ENCODE measurements at regions of chr2 and their contacts with region 1.

Region 1: GRCh38 chr2:39119732-39120520 is 925 bp downstream of the SOS1 start:
- DNase-seq: peak; percentile 66
- H3K4me3 Mint-ChIP-seq: peak overlapping the region; percentile 73
- H3K27ac Mint-ChIP-seq: peak overlapping the region; percentile 67
- H3K4me1 Mint-ChIP-seq: peaks cover 25% of the 10 kb centered on the region
- H3K27me3 Mint-ChIP-seq: no peaks in the 10 kb centered on the region
- CTCF ChIP-seq: no peak

Region 2: DNA sequence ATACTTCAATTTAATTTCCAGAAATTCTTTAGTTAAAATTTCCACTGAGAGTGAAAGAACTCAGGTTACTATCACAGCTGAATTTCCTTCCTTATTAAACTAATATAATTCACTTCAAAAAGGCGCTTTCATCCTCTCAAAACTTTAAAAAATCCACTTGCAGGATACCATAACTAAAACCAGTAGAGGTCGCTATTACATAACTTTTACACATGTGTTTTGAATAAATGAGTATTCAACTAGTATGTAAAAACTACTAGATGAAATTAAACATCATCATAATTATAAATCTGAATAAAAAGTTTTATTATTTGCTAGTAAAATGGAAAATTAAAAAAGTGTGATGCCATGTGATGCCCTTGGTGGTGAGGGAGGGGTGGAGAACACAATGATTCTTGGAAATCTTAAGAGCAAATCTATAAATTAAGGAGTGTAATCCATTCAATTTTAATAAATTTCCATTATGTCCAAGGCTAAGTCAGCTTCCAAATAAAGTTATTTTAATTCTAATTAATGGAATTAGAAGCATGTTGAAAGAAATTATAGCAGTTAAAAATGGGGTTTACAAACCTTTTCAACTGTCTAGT is 60.5 kb before region 1 on chr2:
- CTCF ChIA-PET with region 1: no interaction called
- intact Hi-C with region 1: loop called (anchors 2 kb)
- DNase-seq: no peak
- H3K4me3 Mint-ChIP-seq: no peak overlapping the region
- H3K27ac Mint-ChIP-seq: no peak overlapping the region
- H3K4me1 Mint-ChIP-seq: no peaks in the 10 kb centered on the region
- H3K27me3 Mint-ChIP-seq: no peaks in the 10 kb centered on the region
- CTCF ChIP-seq: peak; percentile 43

Region 3: GRCh38 chr2:39080152-39080551 is 39.8 kb before region 1 on chr2:
- CTCF ChIA-PET with region 1: no interaction called
- intact Hi-C with region 1: loop called (anchors 5 kb)
- DNase-seq: no peak
- H3K4me3 Mint-ChIP-seq: no peak overlapping the region
- H3K27ac Mint-ChIP-seq: no peak overlapping the region
- H3K4me1 Mint-ChIP-seq: no peaks in the 10 kb centered on the region
- H3K27me3 Mint-ChIP-seq: no peaks in the 10 kb centered on the region
- CTCF ChIP-seq: no peak

Region 4: DNA sequence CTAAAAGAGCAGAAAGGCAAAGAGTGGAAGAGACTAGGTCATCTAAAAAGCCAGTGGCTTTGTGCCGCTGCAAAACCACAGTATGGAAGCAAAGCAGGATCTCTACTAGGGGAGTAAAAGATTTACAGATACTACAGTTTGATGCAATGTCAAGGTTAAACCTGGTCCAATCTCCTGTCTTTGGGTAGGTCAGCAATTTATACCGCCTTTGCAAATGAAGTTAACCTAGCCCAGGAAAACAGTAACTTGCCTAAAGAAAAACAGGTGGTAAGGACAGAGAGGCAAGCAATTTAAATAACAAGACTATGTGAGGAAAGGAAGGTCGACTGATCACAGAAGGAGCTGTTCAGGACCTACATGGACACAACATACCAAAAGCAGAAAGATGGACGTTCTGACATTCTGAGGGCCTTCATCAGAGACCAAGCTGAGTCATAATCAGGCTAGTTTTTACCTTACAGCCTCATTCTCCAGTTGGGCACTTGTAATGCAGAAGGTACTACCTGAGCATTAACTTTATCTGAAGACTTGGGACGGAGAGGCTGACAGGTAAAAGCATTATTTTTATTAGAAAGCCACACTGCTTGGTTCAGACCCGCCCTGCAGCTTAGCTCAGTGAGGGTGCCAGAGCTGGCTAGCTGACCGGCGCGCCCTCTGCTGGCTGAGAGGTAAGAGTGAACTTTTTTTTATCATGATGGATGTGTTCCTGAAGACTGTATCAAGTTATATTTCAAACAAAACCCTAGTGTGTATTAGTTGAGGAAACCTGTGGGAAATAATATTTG is 107.9 kb after region 1 on chr2:
- CTCF ChIA-PET with region 1: interaction called, 9 read pairs
- intact Hi-C with region 1: loop called (anchors 2 kb)
- DNase-seq: peak; percentile 76
- H3K4me3 Mint-ChIP-seq: no peak overlapping the region
- H3K27ac Mint-ChIP-seq: no peak overlapping the region
- H3K4me1 Mint-ChIP-seq: no peaks in the 10 kb centered on the region
- H3K27me3 Mint-ChIP-seq: no peaks in the 10 kb centered on the region
- CTCF ChIP-seq: peak; percentile 61